WTC11 (cell line): ENCODE measurements at regions of chr11 and their contacts with region 1.

Region 1: DNA sequence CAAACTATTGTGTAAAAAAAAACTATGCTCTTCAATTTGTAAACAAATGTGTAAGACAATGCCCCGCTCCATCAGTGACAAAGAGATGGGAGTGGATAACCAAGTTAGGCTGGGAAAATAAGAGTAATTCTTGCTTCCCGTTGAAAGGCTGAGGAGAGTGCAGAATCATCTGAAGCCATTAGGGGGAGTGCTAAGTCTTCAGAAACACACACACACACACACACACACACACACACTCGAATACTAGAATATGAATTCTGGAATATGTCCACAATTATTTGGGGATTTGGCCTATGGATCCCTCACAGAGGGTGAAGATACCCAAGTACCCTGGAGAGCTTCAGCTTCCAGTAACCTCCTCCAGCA is 27.8 kb upstream of the ROBO3 start:
- DNase-seq: no peak
- ATAC-seq: peak; percentile 40
- H3K4me3 Mint-ChIP-seq: no peak overlapping the region
- H3K27ac Mint-ChIP-seq: no peak overlapping the region
- H3K4me1 Mint-ChIP-seq: peaks cover 32% of the 10 kb centered on the region
- H3K27me3 Mint-ChIP-seq: peaks cover 34% of the 10 kb centered on the region
- CTCF ChIP-seq: no peak; the same call in 1 of the 2 replicates

Region 2: DNA sequence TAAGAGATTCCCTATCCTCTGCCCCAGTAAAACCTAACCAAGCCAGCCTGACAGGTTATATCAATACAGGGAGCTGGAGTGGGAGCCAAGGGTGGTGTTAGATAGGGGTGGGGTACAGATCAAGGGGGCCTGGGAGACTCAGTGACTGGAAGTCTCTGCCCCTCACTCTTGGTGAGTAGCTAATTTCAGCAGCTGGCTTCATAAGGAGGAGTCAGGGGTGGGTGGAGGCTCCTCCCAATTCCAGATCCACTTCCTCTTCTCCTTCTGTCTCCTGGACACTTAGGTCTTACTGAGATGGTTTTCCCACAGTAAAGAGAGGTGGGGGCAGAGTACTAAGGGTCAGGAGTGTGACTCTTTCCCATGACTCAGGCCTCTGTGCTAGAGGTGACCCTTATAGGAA is 84.3 kb before region 1 on chr11:
- CTCF ChIA-PET with region 1: interaction called, 24 read pairs
- POLR2A ChIA-PET with region 1: no interaction called
- DNase-seq: no peak
- ATAC-seq: no peak
- H3K4me3 Mint-ChIP-seq: no peak overlapping the region
- H3K27ac Mint-ChIP-seq: no peak overlapping the region
- H3K4me1 Mint-ChIP-seq: peaks cover 45% of the 10 kb centered on the region
- H3K27me3 Mint-ChIP-seq: peaks cover 100% of the 10 kb centered on the region
- CTCF ChIP-seq: no peak

Region 3: GRCh38 chr11:124800226-124800929 is 37.1 kb before region 1 on chr11 and contains the start of gene MSANTD2:
- CTCF ChIA-PET with region 1: interaction called, 32 read pairs
- POLR2A ChIA-PET with region 1: no interaction called
- DNase-seq: peak; percentile 75
- ATAC-seq: peak; percentile 84
- H3K4me3 Mint-ChIP-seq: peak within 1 kb of the TSS; percentile 88
- H3K27ac Mint-ChIP-seq: peak within 1 kb of the TSS; percentile 84
- H3K4me1 Mint-ChIP-seq: peaks cover 33% of the 10 kb centered on the region
- H3K27me3 Mint-ChIP-seq: no peaks in the 10 kb centered on the region; the same call in 1 of the 2 replicates
- CTCF ChIP-seq: no peak
- total RNA-seq, gene MSANTD2: 16.5 to 17.5 TPM (median 16.8 TPM) in 3 replicates

Region 4: GRCh38 chr11:124891373-124891861 is 53.9 kb after region 1 on chr11:
- CTCF ChIA-PET with region 1: no interaction called
- POLR2A ChIA-PET with region 1: no interaction called
- DNase-seq: peak; percentile 34
- ATAC-seq: peak; percentile 84
- H3K4me3 Mint-ChIP-seq: no peak overlapping the region
- H3K27ac Mint-ChIP-seq: no peak overlapping the region
- H3K4me1 Mint-ChIP-seq: no peaks in the 10 kb centered on the region
- H3K27me3 Mint-ChIP-seq: peaks cover 29% of the 10 kb centered on the region
- CTCF ChIP-seq: no peak

Region 5: DNA sequence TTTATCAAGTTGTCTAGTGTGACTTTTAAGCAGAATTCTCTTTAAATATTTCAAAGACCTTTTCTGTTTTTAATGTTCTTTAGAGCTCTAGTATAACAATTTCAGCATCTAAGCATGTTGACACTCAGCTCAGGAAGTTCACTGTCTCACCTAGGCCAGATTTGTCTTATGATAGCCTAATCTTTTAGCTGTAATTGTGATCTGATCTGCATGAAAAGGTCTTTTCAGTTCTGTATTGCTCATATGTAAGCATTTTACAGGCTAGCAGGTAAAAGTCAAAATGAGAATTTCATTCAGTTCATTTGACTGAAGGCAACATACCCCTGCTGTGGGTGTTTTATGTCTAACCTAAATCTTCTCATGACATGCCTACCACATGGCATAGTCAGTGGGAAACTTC is 178.9 kb after region 1 on chr11:
- CTCF ChIA-PET with region 1: no interaction called
- POLR2A ChIA-PET with region 1: no interaction called
- DNase-seq: no peak
- ATAC-seq: no peak
- H3K4me3 Mint-ChIP-seq: no peak overlapping the region
- H3K27ac Mint-ChIP-seq: no peak overlapping the region
- H3K4me1 Mint-ChIP-seq: no peaks in the 10 kb centered on the region
- H3K27me3 Mint-ChIP-seq: no peaks in the 10 kb centered on the region
- CTCF ChIP-seq: no peak